ENCODE measurements at regions of chr2 and their contacts with region 1.

Region 1: GRCh38 chr2:43178602-43179542 is 47.5 kb downstream of the ZFP36L2 start:
- DNase-seq: peak; percentile 97
- H3K4me3 ChIP-seq: no peak overlapping the region
- H3K27ac ChIP-seq: peak overlapping the region; percentile 92
- H3K4me1 ChIP-seq: peaks cover 46% of the 10 kb centered on the region
- H3K27me3 ChIP-seq: no peaks in the 10 kb centered on the region
- CTCF ChIP-seq: no peak
- POLR2A ChIP-seq: no peak

Region 2: GRCh38 chr2:42961385-42961811 is 217.5 kb before region 1 on chr2:
- CTCF ChIA-PET with region 1: no interaction called
- POLR2A ChIA-PET with region 1: no interaction called
- dilution Hi-C with region 1: no loop called
- intact Hi-C with region 1: loop called (anchors 2 kb)
- DNase-seq: peak; percentile 95
- H3K4me3 ChIP-seq: no peak overlapping the region
- H3K27ac ChIP-seq: peak overlapping the region; percentile 81
- H3K4me1 ChIP-seq: peaks cover 24% of the 10 kb centered on the region
- H3K27me3 ChIP-seq: no peaks in the 10 kb centered on the region
- CTCF ChIP-seq: no peak
- POLR2A ChIP-seq: no peak

Region 3: GRCh38 chr2:43219383-43220228 is 40.7 kb after region 1 on chr2:
- CTCF ChIA-PET with region 1: interaction called, 22 read pairs
- POLR2A ChIA-PET with region 1: interaction called, 12 read pairs
- dilution Hi-C with region 1: loop called (anchors 10 kb)
- intact Hi-C with region 1: loop called (anchors 1 kb)
- DNase-seq: peak; percentile 84
- H3K4me3 ChIP-seq: peak overlapping the region in 2 of 3 experiments; percentile 0 to 37
- H3K27ac ChIP-seq: peak overlapping the region; percentile 88
- H3K4me1 ChIP-seq: peaks cover 54% of the 10 kb centered on the region
- H3K27me3 ChIP-seq: no peaks in the 10 kb centered on the region
- CTCF ChIP-seq: no peak
- POLR2A ChIP-seq: peak; percentile 62